IMR-90 (cell line): ENCODE measurements at regions of chr5 and their contacts with region 1.

Region 1: DNA sequence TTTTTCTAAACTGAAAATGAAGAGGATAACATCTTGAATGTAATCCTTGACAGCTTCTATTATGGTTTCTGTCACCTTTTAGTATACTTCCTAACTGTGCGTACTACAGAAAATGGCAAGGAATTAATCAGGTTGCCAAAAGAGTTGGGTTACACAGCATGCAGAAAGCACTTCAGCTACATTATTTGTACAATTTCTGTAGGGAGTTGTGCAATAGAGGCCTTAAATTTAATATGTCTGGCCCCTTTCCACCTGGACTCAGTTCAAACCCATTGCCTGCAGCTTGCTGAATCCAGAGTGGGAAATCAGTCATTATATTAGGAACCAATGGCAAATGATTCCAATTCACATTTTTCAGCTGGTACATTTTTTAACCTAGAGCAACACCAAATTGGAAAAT is 549.7 kb downstream of the CSNK1G3 start:
- DNase-seq: peak; percentile 28
- ATAC-seq: no peak
- H3K4me3 ChIP-seq: no peak overlapping the region
- H3K27ac ChIP-seq: no peak overlapping the region
- H3K4me1 ChIP-seq: no peaks in the 10 kb centered on the region; the same call in 1 of the 2 replicates
- H3K27me3 ChIP-seq: no peaks in the 10 kb centered on the region; the same call in 1 of the 2 replicates
- CTCF ChIP-seq: no peak
- POLR2A ChIP-seq: no peak
- RAD21 ChIP-seq: no peak

Region 2: GRCh38 chr5:122896598-122897282 is 1164.9 kb before region 1 on chr5:
- CTCF ChIA-PET with region 1: no interaction called
- POLR2A ChIA-PET with region 1: no interaction called
- dilution Hi-C with region 1: no loop called
- in situ Hi-C with region 1: no loop called
- intact Hi-C with region 1: no loop called
- DNase-seq: peak; percentile 85
- ATAC-seq: peak; percentile 91
- H3K4me3 ChIP-seq: no peak overlapping the region
- H3K27ac ChIP-seq: no peak overlapping the region
- H3K4me1 ChIP-seq: peaks cover 3% of the 10 kb centered on the region; the same call in 1 of the 2 replicates
- H3K27me3 ChIP-seq: no peaks in the 10 kb centered on the region; the same call in 1 of the 2 replicates
- CTCF ChIP-seq: peak; percentile 61
- POLR2A ChIP-seq: no peak
- RAD21 ChIP-seq: peak; percentile 65

Region 3: GRCh38 chr5:124093658-124094057 is 32.0 kb after region 1 on chr5:
- CTCF ChIA-PET with region 1: no interaction called
- POLR2A ChIA-PET with region 1: no interaction called
- dilution Hi-C with region 1: no loop called
- in situ Hi-C with region 1: no loop called
- intact Hi-C with region 1: loop called (anchors 1 kb)
- DNase-seq: no peak
- ATAC-seq: no peak
- H3K4me3 ChIP-seq: no peak overlapping the region
- H3K27ac ChIP-seq: no peak overlapping the region
- H3K4me1 ChIP-seq: no peaks in the 10 kb centered on the region
- H3K27me3 ChIP-seq: no peaks in the 10 kb centered on the region
- CTCF ChIP-seq: no peak
- POLR2A ChIP-seq: no peak
- RAD21 ChIP-seq: no peak